ENCODE measurements at regions of chr10 and their contacts with region 1.

Region 1: GRCh38 chr10:114526504-114527238 is 122.4 kb upstream of the AFAP1L2 start:
- DNase-seq: peak; percentile 82
- H3K4me3 Mint-ChIP-seq: peak overlapping the region; percentile 87
- H3K27ac Mint-ChIP-seq: peak overlapping the region; percentile 92
- H3K4me1 Mint-ChIP-seq: peaks cover 58% of the 10 kb centered on the region
- H3K27me3 Mint-ChIP-seq: peaks cover 2% of the 10 kb centered on the region

Region 2: GRCh38 chr10:114173921-114174694 is 352.6 kb before region 1 on chr10 and contains the start of gene CCDC186:
- intact Hi-C with region 1: loop called (anchors 1 kb)
- DNase-seq: peak; percentile 96
- H3K4me3 Mint-ChIP-seq: peak within 1 kb of the TSS; percentile 95
- H3K27ac Mint-ChIP-seq: peak within 1 kb of the TSS; percentile 91
- H3K4me1 Mint-ChIP-seq: peaks cover 35% of the 10 kb centered on the region
- H3K27me3 Mint-ChIP-seq: peaks cover 12% of the 10 kb centered on the region
- total RNA-seq, gene CCDC186: 12.1 and 13.0 TPM in 2 replicates

Region 3: GRCh38 chr10:114492351-114493037 is 34.2 kb before region 1 on chr10:
- intact Hi-C with region 1: loop called (anchors 1 kb)
- DNase-seq: peak; percentile 26
- H3K4me3 Mint-ChIP-seq: peak overlapping the region; percentile 16
- H3K27ac Mint-ChIP-seq: peak overlapping the region; percentile 32
- H3K4me1 Mint-ChIP-seq: peaks cover 72% of the 10 kb centered on the region
- H3K27me3 Mint-ChIP-seq: no peaks in the 10 kb centered on the region

Region 4: DNA sequence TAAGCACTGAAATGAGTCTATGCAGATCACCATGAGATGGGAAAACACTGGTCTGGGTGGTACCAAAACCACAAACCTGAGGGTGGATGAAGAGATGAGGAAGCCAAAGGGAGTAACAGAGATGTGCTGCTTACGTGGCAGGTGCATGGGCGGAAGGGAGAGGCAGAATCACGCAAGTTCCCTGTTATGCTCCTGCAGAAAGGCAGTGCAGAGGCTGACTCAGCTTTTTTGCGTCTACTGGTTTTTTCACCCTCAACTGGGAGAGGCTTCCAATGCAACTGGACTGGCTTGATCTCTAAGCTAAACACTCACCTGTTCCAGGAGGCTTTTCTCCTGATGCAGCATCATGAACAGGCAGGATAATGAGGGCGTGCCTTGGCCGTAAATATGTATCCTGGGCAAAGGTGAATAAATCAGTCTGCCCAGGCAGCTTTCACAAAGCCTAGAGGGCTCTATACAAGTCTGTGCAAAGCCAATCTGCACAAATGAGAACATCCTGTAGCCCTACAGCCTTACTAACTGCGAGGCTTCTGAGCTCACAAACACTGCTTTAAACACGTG is 27.0 kb before region 1 on chr10:
- intact Hi-C with region 1: loop called (anchors 1 kb)
- DNase-seq: peak; percentile 59
- H3K4me3 Mint-ChIP-seq: peak overlapping the region; percentile 63
- H3K27ac Mint-ChIP-seq: peak overlapping the region; percentile 85
- H3K4me1 Mint-ChIP-seq: peaks cover 81% of the 10 kb centered on the region
- H3K27me3 Mint-ChIP-seq: no peaks in the 10 kb centered on the region

Region 5: DNA sequence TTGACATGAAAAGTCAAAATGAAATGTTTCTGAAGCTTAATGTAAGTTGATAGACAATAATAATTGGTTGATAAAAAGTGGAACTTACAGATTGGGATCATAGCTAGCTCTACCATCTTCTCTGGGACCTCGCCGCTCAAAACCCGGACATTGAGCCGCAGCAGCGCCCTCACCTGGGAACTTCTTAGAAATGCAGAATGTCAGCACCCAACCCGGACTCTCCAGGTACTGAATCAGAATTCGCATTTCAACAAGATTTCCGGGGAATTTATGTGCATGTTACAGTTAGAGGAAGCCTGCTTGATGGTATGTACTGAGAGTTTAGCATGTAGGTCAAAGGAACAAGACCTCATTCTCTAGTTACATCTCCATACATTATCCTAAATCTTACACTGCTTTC is 168.1 kb after region 1 on chr10:
- intact Hi-C with region 1: no loop called
- DNase-seq: no peak
- H3K4me3 Mint-ChIP-seq: no peak overlapping the region
- H3K27ac Mint-ChIP-seq: no peak overlapping the region
- H3K4me1 Mint-ChIP-seq: peaks cover 7% of the 10 kb centered on the region
- H3K27me3 Mint-ChIP-seq: peaks cover 28% of the 10 kb centered on the region

Region 6: DNA sequence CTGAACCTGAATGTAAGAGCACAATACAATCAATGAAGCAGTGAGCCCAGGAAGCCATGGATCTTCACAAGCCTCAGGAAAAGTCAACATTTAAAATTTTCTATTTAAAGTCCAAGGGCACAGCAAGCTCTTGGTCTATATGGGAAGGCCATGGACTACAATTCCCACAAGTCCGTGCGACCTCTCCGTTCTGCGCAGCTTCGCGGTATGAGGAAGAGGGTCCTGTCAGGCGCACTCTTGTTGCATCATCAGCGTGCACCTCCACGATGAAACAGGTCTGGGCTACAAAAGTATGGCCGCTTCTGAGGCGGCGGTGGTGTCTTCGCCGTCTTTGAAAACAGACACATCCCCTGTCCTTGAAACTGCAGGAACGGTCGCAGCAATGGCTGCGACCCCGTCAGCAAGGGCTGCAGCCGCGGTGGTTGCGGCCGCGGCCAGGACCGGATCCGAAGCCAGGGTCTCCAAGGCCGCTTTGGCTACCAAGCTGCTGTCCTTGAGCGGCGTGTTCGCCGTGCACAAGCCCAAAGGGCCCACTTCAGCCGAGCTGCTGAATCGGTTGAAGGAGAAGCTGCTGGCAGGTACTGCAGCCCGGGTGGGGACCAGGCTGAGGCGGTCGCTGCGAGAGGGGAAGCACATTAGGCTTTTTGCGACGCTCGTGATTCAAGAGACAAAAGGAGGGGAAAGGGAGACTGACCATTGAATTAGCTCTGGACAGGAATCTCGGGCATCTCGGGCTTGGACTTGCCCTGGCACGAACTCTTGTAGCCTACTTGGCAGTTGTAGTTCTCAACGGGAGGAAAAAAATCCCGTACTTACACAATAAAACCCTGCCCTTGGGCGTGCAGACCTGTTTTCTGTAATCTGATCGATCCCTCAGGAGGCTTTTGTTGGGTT is 411.5 kb after region 1 on chr10 and contains the start of gene TRUB1:
- intact Hi-C with region 1: loop called (anchors 5 kb)
- DNase-seq: peak; percentile 83
- H3K4me3 Mint-ChIP-seq: peak within 1 kb of the TSS; percentile 99
- H3K27ac Mint-ChIP-seq: peak within 1 kb of the TSS; percentile 84
- H3K4me1 Mint-ChIP-seq: peaks cover 35% of the 10 kb centered on the region
- H3K27me3 Mint-ChIP-seq: no peaks in the 10 kb centered on the region
- total RNA-seq, gene TRUB1: 21.6 TPM in 2 replicates